ENCODE measurements at regions of chr7 and their contacts with region 1.

Region 1: GRCh38 chr7:66628361-66629140 is at the start of gene KCTD7:
- DNase-seq: peak; percentile 100
- H3K4me3 ChIP-seq: peak within 1 kb of the TSS; percentile 64 to 94
- H3K27ac ChIP-seq: peak within 1 kb of the TSS; percentile 90 to 94
- H3K4me1 ChIP-seq: peaks cover 0 to 15% of the 10 kb centered on the region in 2 experiments; a peak in 1 of 4 replicates
- H3K27me3 ChIP-seq: no peaks in the 10 kb centered on the region
- CTCF ChIP-seq: no peak
- EP300 ChIP-seq: no peak
- RAD21 ChIP-seq: no peak
- polyA plus RNA-seq, gene KCTD7: 19.5 and 27.4 TPM in 2 replicates

Region 2: DNA sequence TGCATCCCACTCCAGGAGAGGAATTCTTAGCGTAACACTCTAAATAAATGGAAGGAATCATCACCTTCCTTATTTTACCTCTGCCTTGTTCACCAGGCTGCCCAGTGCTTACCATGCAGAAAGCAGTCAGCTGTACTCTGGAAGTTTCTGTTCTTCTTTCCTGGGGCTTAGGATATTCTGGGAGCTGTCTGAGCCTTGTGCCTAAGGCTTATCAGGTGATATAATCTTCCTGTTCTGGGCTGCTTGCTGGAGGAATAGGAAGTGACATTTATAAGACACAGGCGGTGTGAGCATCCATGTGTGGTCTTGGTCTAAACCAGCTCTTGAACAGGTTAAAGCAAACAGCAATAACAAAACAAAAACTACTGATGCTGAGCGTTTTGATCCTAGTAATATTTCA is 13.6 kb after region 1 on chr7:
- CTCF ChIA-PET with region 1: interaction called, 10 read pairs
- POLR2A ChIA-PET with region 1: interaction called, 9 read pairs
- DNase-seq: peak; percentile 34
- H3K4me3 ChIP-seq: no peak overlapping the region
- H3K27ac ChIP-seq: no peak overlapping the region; a peak in 1 of 4 replicates
- H3K4me1 ChIP-seq: peaks cover 0 to 2% of the 10 kb centered on the region in 2 experiments; a peak in 1 of 4 replicates
- H3K27me3 ChIP-seq: no peaks in the 10 kb centered on the region
- CTCF ChIP-seq: no peak
- EP300 ChIP-seq: peak in 1 of 2 experiments; percentile 22; a peak in 1 of 4 replicates
- RAD21 ChIP-seq: no peak

Region 3: DNA sequence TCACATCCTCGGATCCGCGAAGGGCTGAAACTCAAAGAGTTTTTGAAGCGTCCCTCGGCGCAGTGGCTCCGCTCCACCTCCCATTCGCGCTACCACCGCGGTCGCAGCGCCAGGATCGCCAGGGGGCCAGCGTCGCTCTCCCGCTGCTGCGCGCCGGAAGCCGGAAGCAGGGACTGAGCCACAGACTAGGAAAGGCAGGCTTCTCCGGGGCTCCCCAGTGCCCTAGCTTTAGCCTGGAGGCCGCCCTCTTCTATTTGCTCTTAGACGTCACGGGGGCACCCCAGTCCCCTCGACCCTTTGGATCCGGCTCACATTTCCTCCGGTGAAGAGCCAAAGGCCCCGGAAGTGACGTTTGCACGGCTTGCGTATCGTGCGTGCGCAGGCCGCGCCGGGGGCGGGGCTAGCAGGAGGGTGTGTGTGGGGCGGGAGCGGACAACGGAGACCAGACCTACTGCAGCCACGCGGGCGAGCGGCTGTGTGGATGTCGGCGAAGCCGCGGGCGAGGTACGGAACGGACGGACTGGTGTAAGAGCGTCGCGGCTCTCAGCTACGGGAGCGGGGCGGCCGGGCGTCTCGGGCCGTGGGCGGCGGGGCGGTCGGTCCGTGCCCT is 25.7 kb after region 1 on chr7:
- CTCF ChIA-PET with region 1: no interaction called
- POLR2A ChIA-PET with region 1: interaction called, 20 read pairs
- DNase-seq: peak; percentile 100
- H3K4me3 ChIP-seq: peak overlapping the region; percentile 67 to 99
- H3K27ac ChIP-seq: peak overlapping the region; percentile 93 to 98
- H3K4me1 ChIP-seq: peaks cover 0 to 10% of the 10 kb centered on the region in 2 experiments; a peak in 2 of 4 replicates
- H3K27me3 ChIP-seq: no peaks in the 10 kb centered on the region
- CTCF ChIP-seq: no peak; the same call in 1 of the 2 replicates
- EP300 ChIP-seq: 0 out of 4 replicates have a peak, but pooled peaks of 1 of the 2 experiments have one; percentile 29
- RAD21 ChIP-seq: no peak